Prostate gland (tissue), 2 donors: ENCODE measurements at regions of chr12 and their contacts with region 1.

Region 1: DNA sequence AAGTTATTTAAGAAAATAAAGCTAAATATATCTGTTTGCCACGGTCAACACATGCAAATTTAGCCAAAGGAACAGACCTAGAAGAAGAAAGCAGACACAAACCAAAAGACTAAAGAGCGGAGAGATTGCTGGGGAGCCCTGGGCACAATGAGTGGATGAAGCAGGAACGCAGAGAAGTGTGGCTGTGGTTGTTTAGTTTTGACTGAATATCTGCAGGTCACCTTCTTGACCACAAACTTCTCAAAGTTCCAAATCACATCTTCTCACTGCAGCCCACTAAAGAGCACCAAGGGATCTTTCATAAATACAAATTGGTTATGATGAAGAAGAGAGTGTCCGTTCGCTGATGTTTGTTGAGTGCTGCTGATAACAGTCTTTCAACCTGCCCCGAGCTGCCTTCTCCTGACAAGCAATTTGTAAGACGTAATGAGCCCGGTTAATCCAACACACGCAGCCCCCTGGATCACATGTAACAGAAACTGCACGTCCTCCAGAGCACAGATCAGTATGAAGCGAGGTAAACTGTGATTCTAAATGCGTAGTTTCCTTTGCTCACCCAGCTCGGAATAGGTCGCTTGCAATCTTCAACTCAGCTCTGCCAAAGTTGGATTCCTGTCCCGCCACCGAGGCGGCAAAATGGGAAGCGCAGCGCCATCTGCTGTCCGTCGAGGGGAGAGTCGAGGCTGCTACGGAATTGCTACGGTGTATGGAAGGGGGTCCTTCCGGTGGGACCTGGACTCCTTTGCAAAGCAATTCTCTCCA is 120.8 kb downstream of the GXYLT1 start:
- DNase-seq: peak; percentile 55
- H3K4me3 ChIP-seq: peak overlapping the region; percentile 11 to 20
- H3K27ac ChIP-seq: no peak overlapping the region
- H3K4me1 ChIP-seq: no peaks in the 10 kb centered on the region
- H3K27me3 ChIP-seq: no peaks in the 10 kb centered on the region
- CTCF ChIP-seq: peak; percentile 70 to 90 (median 82)
- POLR2A ChIP-seq: no peak

Region 2: GRCh38 chr12:40946612-40947194 is 1077.2 kb before region 1 on chr12:
- intact Hi-C with region 1: loop called (anchors 5 kb)
- DNase-seq: no peak
- H3K4me3 ChIP-seq: no peak overlapping the region
- H3K27ac ChIP-seq: no peak overlapping the region
- H3K4me1 ChIP-seq: no peaks in the 10 kb centered on the region
- H3K27me3 ChIP-seq: no peaks in the 10 kb centered on the region
- CTCF ChIP-seq: peak in 3 of 4 experiments; percentile 60 to 74 (median 63)
- POLR2A ChIP-seq: no peak

Region 3: DNA sequence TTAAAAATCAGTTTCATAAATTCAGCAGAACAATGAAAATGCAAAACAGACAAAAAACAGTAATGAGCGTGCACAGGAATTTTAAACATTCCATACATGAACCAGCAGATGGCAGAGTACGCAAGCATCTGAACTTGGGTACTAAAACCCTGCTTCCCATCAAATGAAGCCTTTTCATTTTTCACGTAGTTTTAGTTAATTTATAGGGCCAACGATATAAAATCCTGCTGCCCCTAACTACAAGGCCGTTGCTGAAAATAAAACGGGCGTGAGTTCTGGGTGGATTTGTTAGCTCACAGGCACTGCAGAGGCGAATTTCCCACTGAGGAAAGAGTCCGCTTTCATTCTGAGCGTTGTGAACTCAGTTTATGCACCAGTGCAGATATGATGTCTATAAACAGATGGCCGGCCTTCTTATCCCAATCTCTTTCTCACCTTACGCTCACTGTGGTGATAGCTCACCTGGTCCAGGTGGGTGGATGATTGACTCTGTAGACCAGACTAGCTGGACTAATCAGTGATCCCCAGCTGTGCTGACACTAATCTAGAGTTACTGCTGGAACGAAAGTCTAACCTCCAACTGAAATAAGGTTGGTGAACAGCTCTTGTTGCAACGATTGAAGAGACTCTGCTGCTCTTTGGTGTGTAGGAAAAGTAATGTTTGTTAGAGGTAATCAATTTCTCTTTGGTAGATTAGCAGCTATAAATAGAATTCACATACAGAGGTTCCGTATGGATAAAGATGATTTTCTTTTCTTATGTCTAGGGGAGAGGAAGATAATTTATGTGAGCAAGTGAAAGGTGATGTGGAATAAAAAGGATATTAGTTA is 746.6 kb before region 1 on chr12:
- intact Hi-C with region 1: loop called (anchors 2 kb)
- DNase-seq: peak; percentile 10
- H3K4me3 ChIP-seq: no peak overlapping the region
- H3K27ac ChIP-seq: no peak overlapping the region
- H3K4me1 ChIP-seq: no peaks in the 10 kb centered on the region
- H3K27me3 ChIP-seq: no peaks in the 10 kb centered on the region
- CTCF ChIP-seq: peak in 3 of 4 experiments; percentile 56 to 62 (median 62)
- POLR2A ChIP-seq: no peak

Region 4: GRCh38 chr12:41684997-41685396 is 338.9 kb before region 1 on chr12:
- intact Hi-C with region 1: loop called (anchors 10 kb)
- DNase-seq: no peak
- H3K4me3 ChIP-seq: no peak overlapping the region
- H3K27ac ChIP-seq: no peak overlapping the region
- H3K4me1 ChIP-seq: no peaks in the 10 kb centered on the region
- H3K27me3 ChIP-seq: no peaks in the 10 kb centered on the region
- CTCF ChIP-seq: peak in 3 of 4 experiments; percentile 25 to 55 (median 46)
- POLR2A ChIP-seq: no peak

Region 5: DNA sequence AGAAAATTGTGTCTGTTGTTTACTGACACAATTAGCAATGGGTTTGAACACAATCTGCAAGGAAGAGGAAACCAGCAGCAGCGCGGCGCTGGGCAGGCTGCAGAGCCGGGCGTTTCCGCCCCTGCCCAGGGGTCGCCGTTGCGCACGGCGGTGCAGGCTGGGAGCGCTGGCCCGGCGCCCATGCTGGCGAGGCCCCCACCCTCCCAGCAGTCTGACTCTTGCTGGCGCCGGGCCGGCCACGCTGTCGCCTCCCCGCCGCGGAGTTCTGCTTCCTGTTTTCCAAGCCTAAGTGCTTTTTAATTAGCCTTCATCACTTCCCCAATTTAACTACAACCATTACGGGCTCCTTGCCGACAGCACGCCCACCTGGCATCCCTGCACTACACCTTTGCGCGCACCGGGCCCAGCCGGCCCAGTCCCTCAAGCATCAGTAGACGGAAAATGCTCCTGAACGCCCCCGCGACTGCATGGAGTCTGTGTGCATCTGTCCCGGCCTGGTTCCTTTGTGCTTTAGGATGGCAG is 91.4 kb before region 1 on chr12:
- intact Hi-C with region 1: no loop called
- DNase-seq: no peak
- H3K4me3 ChIP-seq: peak overlapping the region; percentile 22 to 24
- H3K27ac ChIP-seq: no peak overlapping the region
- H3K4me1 ChIP-seq: no peaks in the 10 kb centered on the region
- H3K27me3 ChIP-seq: no peaks in the 10 kb centered on the region
- CTCF ChIP-seq: no peak
- POLR2A ChIP-seq: no peak

Region 6: GRCh38 chr12:42070036-42070435 is 46.1 kb after region 1 on chr12:
- intact Hi-C with region 1: no loop called
- DNase-seq: no peak
- H3K4me3 ChIP-seq: no peak overlapping the region
- H3K27ac ChIP-seq: no peak overlapping the region
- H3K4me1 ChIP-seq: no peaks in the 10 kb centered on the region
- H3K27me3 ChIP-seq: no peaks in the 10 kb centered on the region
- CTCF ChIP-seq: no peak
- POLR2A ChIP-seq: no peak